IMR-90 (cell line): ENCODE measurements at regions of chr10 and their contacts with region 1.

Region 1: DNA sequence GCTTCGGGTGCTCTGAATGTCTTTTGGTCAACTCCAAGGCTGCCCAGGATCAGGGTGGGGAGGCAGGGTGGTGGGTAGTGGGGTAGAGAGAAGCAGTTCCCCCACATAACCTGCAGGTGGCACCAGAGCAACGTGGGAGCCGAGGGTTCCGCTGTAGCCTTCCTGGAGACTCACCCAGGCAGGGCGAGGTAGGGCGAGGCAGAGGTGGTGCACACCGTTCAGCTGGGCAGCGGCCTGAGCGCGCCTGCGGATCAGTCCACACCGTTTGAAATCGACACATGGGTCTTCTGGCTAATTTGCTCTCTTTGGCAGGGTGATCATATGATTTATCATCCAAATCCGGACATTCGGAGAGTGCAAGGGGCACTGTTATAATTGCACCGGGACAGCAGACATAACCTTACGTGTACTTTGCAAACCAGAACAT is 41.4 kb upstream of the MAP3K8 start:
- DNase-seq: peak; percentile 42
- ATAC-seq: peak; percentile 100
- H3K4me3 ChIP-seq: no peak overlapping the region
- H3K27ac ChIP-seq: no peak overlapping the region
- H3K4me1 ChIP-seq: 0 out of 2 replicates have a peak, but pooled peaks cover 1% of the 10 kb centered on the region
- H3K27me3 ChIP-seq: peaks cover 27% of the 10 kb centered on the region
- CTCF ChIP-seq: peak; percentile 92
- POLR2A ChIP-seq: no peak
- RAD21 ChIP-seq: peak; percentile 95

Region 2: DNA sequence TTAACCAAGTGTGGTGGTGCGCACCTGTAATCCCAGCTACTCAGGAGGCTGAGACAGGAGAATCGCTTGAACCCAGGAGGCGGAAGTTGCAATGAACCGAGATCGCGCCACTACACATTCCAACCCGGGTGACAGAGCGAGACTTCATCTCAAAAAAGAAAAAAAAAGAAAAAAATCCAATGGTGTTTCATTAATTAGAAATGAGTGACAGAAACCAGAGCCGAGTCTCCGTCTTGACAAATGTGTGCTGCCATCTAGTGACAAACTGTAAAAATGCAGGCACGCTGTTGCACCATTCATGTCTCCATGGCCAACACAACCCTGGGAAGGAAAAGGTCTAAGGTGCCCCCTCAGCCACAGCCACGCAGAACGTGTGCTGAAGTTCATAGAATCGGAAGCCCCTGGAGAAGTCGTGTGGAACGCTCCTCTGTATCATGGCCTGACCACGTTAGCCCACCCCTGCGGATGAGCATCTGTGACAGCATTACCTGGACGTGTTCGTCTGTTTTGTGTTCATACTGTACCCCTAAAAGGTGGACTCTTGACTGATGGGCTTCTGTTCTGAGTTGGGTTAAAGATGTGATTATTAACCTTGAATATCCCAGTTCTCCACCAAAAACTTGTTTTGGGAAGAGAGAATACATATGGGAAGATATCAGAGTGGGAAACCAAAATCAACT is 142.0 kb after region 1 on chr10:
- CTCF ChIA-PET with region 1: no interaction called
- POLR2A ChIA-PET with region 1: no interaction called
- dilution Hi-C with region 1: no loop called
- in situ Hi-C with region 1: loop called (anchors 5 kb)
- intact Hi-C with region 1: loop called (anchors 1 kb)
- DNase-seq: peak; percentile 67
- ATAC-seq: peak; percentile 74
- H3K4me3 ChIP-seq: no peak overlapping the region
- H3K27ac ChIP-seq: no peak overlapping the region
- H3K4me1 ChIP-seq: 0 out of 2 replicates have a peak, but pooled peaks cover 2% of the 10 kb centered on the region
- H3K27me3 ChIP-seq: peaks cover 7% of the 10 kb centered on the region
- CTCF ChIP-seq: peak; percentile 82
- POLR2A ChIP-seq: no peak
- RAD21 ChIP-seq: peak; percentile 86

Region 3: GRCh38 chr10:30557884-30558283 is 165.3 kb after region 1 on chr10:
- CTCF ChIA-PET with region 1: no interaction called
- POLR2A ChIA-PET with region 1: no interaction called
- dilution Hi-C with region 1: no loop called
- in situ Hi-C with region 1: no loop called
- intact Hi-C with region 1: no loop called
- DNase-seq: peak; percentile 47
- ATAC-seq: no peak; the same call in 1 of the 2 replicates
- H3K4me3 ChIP-seq: no peak overlapping the region
- H3K27ac ChIP-seq: no peak overlapping the region
- H3K4me1 ChIP-seq: no peaks in the 10 kb centered on the region
- H3K27me3 ChIP-seq: peaks cover 7% of the 10 kb centered on the region
- CTCF ChIP-seq: no peak
- POLR2A ChIP-seq: no peak
- RAD21 ChIP-seq: no peak

Region 4: GRCh38 chr10:30591249-30591670 is 198.7 kb after region 1 on chr10:
- CTCF ChIA-PET with region 1: interaction called, 3 read pairs
- POLR2A ChIA-PET with region 1: no interaction called
- dilution Hi-C with region 1: no loop called
- in situ Hi-C with region 1: loop called (anchors 5 kb)
- intact Hi-C with region 1: loop called (anchors 1 kb)
- DNase-seq: peak; percentile 53
- ATAC-seq: peak; percentile 85
- H3K4me3 ChIP-seq: no peak overlapping the region
- H3K27ac ChIP-seq: no peak overlapping the region
- H3K4me1 ChIP-seq: no peaks in the 10 kb centered on the region
- H3K27me3 ChIP-seq: peaks cover 32% of the 10 kb centered on the region
- CTCF ChIP-seq: peak; percentile 82
- POLR2A ChIP-seq: no peak
- RAD21 ChIP-seq: peak; percentile 77